AG04450 (cell line): ENCODE measurements at regions of chr2 and their contacts with region 1.

Region 1: GRCh38 chr2:235106874-235107639 is 155.2 kb downstream of the SH3BP4 start:
- DNase-seq: peak; percentile 43
- H3K4me3 ChIP-seq: no peak overlapping the region
- H3K27ac ChIP-seq: no peak overlapping the region
- H3K27me3 ChIP-seq: no peaks in the 10 kb centered on the region
- CTCF ChIP-seq: peak; percentile 82

Region 2: DNA sequence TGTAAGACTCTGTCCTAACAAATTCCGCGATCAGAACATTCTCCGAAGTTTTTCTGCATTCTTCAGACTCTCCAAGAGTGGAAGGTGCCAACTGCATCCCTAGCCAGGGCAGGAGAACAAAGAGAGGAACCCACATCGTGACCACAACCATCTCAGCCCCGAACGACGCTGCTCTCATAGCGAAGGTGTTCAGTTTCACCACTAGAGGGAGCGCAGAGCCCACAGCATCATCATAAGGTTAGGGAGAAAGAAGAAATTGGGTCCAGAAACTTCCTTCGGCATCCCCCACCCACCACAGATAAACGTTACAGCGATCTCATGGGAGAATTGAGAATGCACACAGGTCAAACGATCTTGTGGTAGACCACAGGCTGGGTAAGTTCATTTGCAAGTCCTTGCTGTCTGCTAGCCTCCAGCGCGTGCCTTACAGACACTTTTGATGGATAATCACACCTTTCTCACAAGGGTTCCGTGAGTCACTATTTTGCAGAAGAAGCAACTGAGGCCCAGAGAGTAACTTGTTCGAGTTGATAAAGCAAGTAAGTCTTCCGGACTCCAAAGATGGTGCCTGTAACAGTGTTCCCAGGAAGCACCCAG is 556.4 kb before region 1 on chr2:
- CTCF ChIA-PET with region 1: interaction called, 17 read pairs
- POLR2A ChIA-PET with region 1: no interaction called
- DNase-seq: peak; percentile 78
- H3K4me3 ChIP-seq: no peak overlapping the region
- H3K27ac ChIP-seq: no peak overlapping the region
- H3K27me3 ChIP-seq: no peaks in the 10 kb centered on the region
- CTCF ChIP-seq: peak; percentile 97

Region 3: DNA sequence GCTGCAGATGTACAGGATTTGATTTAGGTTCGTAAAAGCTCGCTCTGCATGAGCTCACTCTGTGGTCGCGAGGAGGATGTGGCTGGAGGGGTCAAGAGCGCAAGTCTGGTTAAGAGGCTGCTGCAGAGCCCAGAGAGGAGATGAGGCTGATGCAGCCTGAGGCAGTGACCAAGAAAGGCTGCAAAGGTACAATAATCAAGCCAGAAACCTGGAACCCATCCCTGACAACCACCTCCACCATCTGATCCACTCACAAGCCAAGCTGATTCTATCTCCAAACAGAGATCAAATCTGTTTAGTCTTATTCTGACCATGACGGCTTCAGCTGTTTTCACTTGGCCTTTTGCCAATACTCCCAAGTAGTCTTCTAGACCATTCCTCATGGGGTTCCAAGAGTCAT is 551.3 kb before region 1 on chr2:
- CTCF ChIA-PET with region 1: interaction called, 17 read pairs
- POLR2A ChIA-PET with region 1: no interaction called
- DNase-seq: no peak
- H3K4me3 ChIP-seq: no peak overlapping the region
- H3K27ac ChIP-seq: no peak overlapping the region
- H3K27me3 ChIP-seq: no peaks in the 10 kb centered on the region
- CTCF ChIP-seq: no peak

Region 4: DNA sequence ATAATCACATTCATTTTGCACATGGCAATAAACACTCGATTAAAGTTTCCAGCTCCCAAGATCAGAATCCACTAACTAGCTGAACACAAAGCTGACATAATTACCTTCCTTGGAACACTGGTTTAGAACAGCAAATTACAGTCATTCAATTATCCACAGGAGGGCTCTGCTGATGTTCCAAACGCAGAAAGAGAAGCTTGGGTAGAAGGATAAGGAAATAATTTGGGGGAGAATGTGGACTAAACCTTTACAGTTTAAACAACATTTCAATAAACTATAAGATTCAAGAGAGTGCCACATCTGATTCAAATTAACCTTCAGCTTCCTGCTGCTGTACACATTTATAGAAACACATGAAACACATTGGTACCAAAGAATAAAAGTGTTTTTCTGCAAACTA is 542.4 kb before region 1 on chr2:
- CTCF ChIA-PET with region 1: interaction called, 10 read pairs
- POLR2A ChIA-PET with region 1: no interaction called
- DNase-seq: peak; percentile 49
- H3K4me3 ChIP-seq: no peak overlapping the region
- H3K27ac ChIP-seq: no peak overlapping the region
- H3K27me3 ChIP-seq: no peaks in the 10 kb centered on the region
- CTCF ChIP-seq: peak; percentile 64

Region 5: GRCh38 chr2:234823877-234824376 is 283.1 kb before region 1 on chr2:
- CTCF ChIA-PET with region 1: no interaction called
- POLR2A ChIA-PET with region 1: no interaction called
- DNase-seq: peak; percentile 96
- H3K4me3 ChIP-seq: no peak overlapping the region
- H3K27ac ChIP-seq: peak overlapping the region; percentile 90
- H3K27me3 ChIP-seq: no peaks in the 10 kb centered on the region
- CTCF ChIP-seq: no peak